Activated naive CD4-positive, alpha-beta T cell treated with anti-CD3 and anti-CD28 coated beads for 36 hours (primary cell): ENCODE measurements at regions of chr3 and their contacts with region 1.

Region 1: GRCh38 chr3:68057637-68058320 is 403.4 kb upstream of the SUCLG2 start:
- DNase-seq: peak; percentile 85
- H3K4me3 Mint-ChIP-seq: peak overlapping the region; percentile 53
- H3K27ac Mint-ChIP-seq: peak overlapping the region; percentile 76
- H3K4me1 Mint-ChIP-seq: peaks cover 67% of the 10 kb centered on the region
- H3K27me3 Mint-ChIP-seq: no peaks in the 10 kb centered on the region

Region 2: GRCh38 chr3:67077656-67078055 is 980.1 kb before region 1 on chr3:
- CTCF ChIA-PET with region 1: no interaction called
- intact Hi-C with region 1: loop called (anchors 5 kb)
- DNase-seq: peak; percentile 16
- H3K4me3 Mint-ChIP-seq: no peak overlapping the region
- H3K27ac Mint-ChIP-seq: no peak overlapping the region
- H3K4me1 Mint-ChIP-seq: peaks cover 50% of the 10 kb centered on the region
- H3K27me3 Mint-ChIP-seq: no peaks in the 10 kb centered on the region

Region 3: GRCh38 chr3:67947808-67948508 is 109.8 kb before region 1 on chr3:
- CTCF ChIA-PET with region 1: no interaction called
- intact Hi-C with region 1: loop called (anchors 5 kb)
- DNase-seq: peak; percentile 74
- H3K4me3 Mint-ChIP-seq: peak overlapping the region; percentile 67
- H3K27ac Mint-ChIP-seq: peak overlapping the region; percentile 50
- H3K4me1 Mint-ChIP-seq: peaks cover 30% of the 10 kb centered on the region
- H3K27me3 Mint-ChIP-seq: no peaks in the 10 kb centered on the region

Region 4: GRCh38 chr3:68088216-68088615 is 30.4 kb after region 1 on chr3:
- CTCF ChIA-PET with region 1: no interaction called
- intact Hi-C with region 1: loop called (anchors 1 kb)
- DNase-seq: peak; percentile 72
- H3K4me3 Mint-ChIP-seq: no peak overlapping the region
- H3K27ac Mint-ChIP-seq: no peak overlapping the region
- H3K4me1 Mint-ChIP-seq: peaks cover 62% of the 10 kb centered on the region
- H3K27me3 Mint-ChIP-seq: no peaks in the 10 kb centered on the region